Naive thymus-derived CD4-positive, alpha-beta T cell (primary cell): ENCODE measurements at regions of chr1 and their contacts with region 1.

Region 1: DNA sequence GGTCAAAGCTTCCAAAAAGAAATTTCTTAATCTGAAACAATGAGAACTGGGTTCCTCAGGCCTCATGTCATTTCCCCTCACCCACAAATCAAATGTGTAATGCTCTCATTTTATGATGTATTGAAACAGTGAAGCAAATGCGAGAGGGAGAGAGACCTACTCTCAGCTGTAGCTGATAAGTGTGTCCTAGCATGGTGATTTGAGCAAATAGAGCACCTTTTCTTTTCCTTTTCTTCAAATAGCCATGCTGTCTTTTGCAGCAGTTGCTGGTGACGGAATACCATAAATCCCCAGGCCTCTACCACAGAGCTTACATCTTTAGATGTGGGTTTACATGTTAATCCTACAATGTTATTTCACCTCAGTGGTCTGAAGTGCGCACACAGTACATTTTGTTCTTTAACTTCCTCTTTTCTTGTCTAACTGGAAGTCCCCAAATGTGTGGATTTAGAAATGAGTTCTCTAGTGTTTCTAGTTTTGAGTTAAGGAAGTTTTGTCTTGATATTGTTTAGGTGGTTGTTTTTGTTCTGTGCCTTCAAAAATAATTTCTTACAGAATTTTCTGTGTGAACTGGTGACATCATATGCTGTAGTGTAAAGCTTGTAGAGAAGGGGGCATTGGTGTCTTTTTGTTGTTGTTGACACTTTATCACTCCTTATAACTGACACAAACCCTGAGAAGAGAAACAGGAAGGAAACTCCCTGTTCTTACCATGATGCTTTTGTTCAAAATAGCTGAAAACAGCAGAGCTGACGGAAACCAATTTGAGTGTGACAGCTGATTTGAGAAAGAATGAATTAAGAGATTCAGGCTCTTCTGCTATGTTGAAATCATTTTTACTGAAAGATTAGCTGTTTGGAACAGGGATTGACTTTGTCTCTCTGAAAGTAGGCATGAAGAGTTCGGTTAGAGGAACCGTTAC is 12.2 kb downstream of the SMAP2 start:
- DNase-seq: peak in 8 of 9 donors; percentile 55 to 97 (median 94)
- ATAC-seq: peak; percentile 86
- H3K4me3 ChIP-seq: peak overlapping the region; percentile 48
- H3K4me3 Mint-ChIP-seq: peak overlapping the region; percentile 79 to 99 (median 87)
- H3K27ac ChIP-seq: peak overlapping the region; percentile 99
- H3K27ac Mint-ChIP-seq: peak overlapping the region; percentile 97 to 99 (median 98)
- H3K4me1 ChIP-seq: peaks cover 82 to 84% of the 10 kb centered on the region in 2 donors
- H3K4me1 Mint-ChIP-seq: peaks cover 71 to 94% (median 90%) of the 10 kb centered on the region in 7 donors
- H3K27me3 ChIP-seq: no peaks in the 10 kb centered on the region
- H3K27me3 Mint-ChIP-seq: no peaks in the 10 kb centered on the region

Region 2: DNA sequence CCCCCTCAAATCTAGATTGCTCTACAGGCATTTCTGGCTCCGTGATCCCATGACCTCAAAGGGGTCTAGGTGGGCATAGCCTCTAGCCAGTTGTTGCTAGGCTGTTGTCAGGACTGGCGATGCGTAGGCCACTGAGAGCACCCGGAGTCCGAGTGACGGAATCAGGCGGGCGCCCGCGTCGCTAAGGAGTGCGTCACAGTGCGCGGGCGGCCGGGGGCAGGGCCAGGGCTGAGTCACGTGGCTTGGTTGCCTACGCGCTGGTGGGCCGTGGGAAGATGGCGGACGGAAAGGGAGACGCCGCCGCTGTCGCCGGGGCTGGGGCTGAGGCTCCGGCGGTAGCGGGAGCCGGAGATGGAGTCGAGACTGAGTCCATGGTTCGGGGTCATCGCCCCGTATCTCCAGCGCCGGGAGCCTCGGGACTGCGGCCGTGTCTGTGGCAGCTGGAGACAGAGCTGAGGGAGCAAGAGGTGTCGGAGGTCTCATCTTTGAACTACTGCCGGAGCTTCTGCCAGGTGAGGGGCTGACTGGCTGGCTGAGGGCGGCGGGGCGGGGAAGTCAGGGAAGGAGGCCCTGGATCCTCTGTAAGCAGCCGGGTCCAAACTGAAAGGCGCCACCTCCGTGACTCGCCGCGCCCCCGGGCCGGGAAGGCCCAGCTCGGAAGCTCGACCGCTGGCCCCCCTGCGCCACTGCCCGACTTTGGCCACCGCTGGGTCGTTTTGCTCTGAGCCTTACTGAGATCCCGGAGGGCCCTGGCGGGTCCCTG is 224.4 kb before region 1 on chr1 and contains the start of gene RLF:
- CTCF ChIA-PET with region 1: no interaction called
- POLR2A ChIA-PET with region 1: interaction called, 4 read pairs
- intact Hi-C with region 1: loop called (anchors 1 to 5 kb)
- DNase-seq: peak; percentile 91 to 97 (median 95)
- ATAC-seq: peak; percentile 99
- H3K4me3 ChIP-seq: peak within 1 kb of the TSS; percentile 76
- H3K4me3 Mint-ChIP-seq: no peak within 1 kb of the TSS
- H3K27ac ChIP-seq: peak within 1 kb of the TSS; percentile 88
- H3K27ac Mint-ChIP-seq: peak within 1 kb of the TSS in 2 of 9 donors; percentile 99 to 100
- H3K4me1 ChIP-seq: peaks cover 22 to 25% of the 10 kb centered on the region in 2 donors
- H3K4me1 Mint-ChIP-seq: peaks cover 5 to 19% (median 7%) of the 10 kb centered on the region in 7 donors
- H3K27me3 ChIP-seq: no peaks in the 10 kb centered on the region
- H3K27me3 Mint-ChIP-seq: no peaks in the 10 kb centered on the region
- total RNA-seq, gene RLF: 20.9 to 28.6 (median 24.7) TPM

Region 3: GRCh38 chr1:40373338-40374283 is 12.1 kb before region 1 on chr1 and contains the start of gene SMAP2:
- CTCF ChIA-PET with region 1: interaction called, 17 read pairs
- POLR2A ChIA-PET with region 1: interaction called, 408 read pairs
- intact Hi-C with region 1: loop called (anchors 1 kb)
- DNase-seq: peak; percentile 94 to 98 (median 96)
- ATAC-seq: peak; percentile 91
- H3K4me3 ChIP-seq: peak within 1 kb of the TSS; percentile 99
- H3K4me3 Mint-ChIP-seq: peak within 1 kb of the TSS; percentile 94 to 100 (median 99)
- H3K27ac ChIP-seq: peak within 1 kb of the TSS; percentile 99
- H3K27ac Mint-ChIP-seq: peak within 1 kb of the TSS; percentile 97 to 100 (median 99)
- H3K4me1 ChIP-seq: peaks cover 33 to 36% of the 10 kb centered on the region in 2 donors
- H3K4me1 Mint-ChIP-seq: peaks cover 43 to 66% (median 54%) of the 10 kb centered on the region in 7 donors
- H3K27me3 ChIP-seq: no peaks in the 10 kb centered on the region
- H3K27me3 Mint-ChIP-seq: peaks cover 0 to 4% (median 0%) of the 10 kb centered on the region in 5 donors
- total RNA-seq, gene SMAP2: 144 to 210 (median 187) TPM

Region 4: DNA sequence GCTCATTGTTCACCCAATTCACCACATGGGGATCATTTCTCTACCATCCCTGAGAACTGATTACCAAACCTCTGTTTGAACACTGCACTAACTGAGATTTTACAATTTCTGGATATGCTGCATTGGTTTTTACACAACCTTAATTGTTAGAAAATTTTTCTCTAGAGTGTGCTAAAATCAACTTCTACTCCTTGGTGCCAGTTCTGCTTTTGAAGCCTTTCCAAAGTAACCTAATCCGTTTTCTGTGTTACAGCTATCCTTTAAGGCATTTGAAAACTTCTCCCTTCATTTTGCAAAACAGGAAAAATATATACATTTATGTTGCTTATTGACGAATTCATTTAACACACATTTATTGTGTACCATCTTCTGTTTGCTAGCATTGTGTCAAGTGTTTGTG is 11.6 kb after region 1 on chr1:
- CTCF ChIA-PET with region 1: interaction called, 16 read pairs
- POLR2A ChIA-PET with region 1: interaction called, 408 read pairs
- intact Hi-C with region 1: loop called (anchors 1 kb)
- DNase-seq: no peak
- ATAC-seq: no peak
- H3K4me3 ChIP-seq: no peak overlapping the region
- H3K4me3 Mint-ChIP-seq: peak overlapping the region; percentile 45 to 90 (median 72)
- H3K27ac ChIP-seq: peak overlapping the region; percentile 99
- H3K27ac Mint-ChIP-seq: peak overlapping the region; percentile 82 to 100 (median 96)
- H3K4me1 ChIP-seq: peaks cover 62 to 89% of the 10 kb centered on the region in 2 donors
- H3K4me1 Mint-ChIP-seq: peaks cover 63 to 97% (median 91%) of the 10 kb centered on the region in 7 donors
- H3K27me3 ChIP-seq: no peaks in the 10 kb centered on the region
- H3K27me3 Mint-ChIP-seq: no peaks in the 10 kb centered on the region